Activated CD4-positive, alpha-beta T cell treated with anti-CD3 and anti-CD28 coated beads, Interleukin-2, amount 10 ng/mL, durations not matched to agents 7 days and 5 days (primary cell): ENCODE measurements at regions of chr17 and their contacts with region 1.

Region 1: DNA sequence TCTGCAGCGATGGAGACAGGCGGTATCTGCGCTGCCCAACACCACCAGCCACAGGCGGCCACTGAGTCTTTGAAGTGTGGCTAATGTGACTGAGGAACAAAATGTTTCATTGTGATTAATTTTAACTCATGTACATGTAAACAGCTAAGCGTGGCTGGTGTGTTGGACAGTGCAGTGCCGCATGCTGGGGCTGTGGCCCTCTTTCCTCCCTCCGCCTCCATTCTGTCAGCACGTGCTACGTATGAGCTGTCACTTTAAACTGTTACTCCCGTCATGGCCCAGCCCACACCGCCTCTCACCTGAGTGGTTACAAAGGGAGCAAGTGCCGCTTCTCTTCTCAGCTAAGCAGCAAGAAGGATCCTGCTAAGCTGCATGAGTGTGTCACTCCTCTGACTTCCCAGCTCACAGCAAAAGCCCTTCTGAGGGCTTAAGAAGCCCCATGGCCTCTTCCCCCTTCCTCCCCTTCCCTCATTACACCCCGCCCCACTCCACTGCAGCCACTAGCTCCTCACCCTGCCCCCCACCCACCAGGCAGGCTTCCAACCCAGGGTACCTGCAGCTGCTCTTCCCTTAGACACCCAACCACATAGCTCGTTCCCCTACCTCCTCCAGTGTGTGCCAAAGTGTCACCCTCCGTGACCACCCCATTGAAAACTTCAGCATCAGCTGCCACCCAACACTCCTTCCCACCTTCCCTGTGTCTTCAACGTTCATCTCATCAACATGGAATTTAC is 15.0 kb downstream of the HASPIN start:
- DNase-seq: peak; percentile 60
- H3K4me3 Mint-ChIP-seq: no peak overlapping the region
- H3K27ac Mint-ChIP-seq: peak overlapping the region; percentile 33
- H3K4me1 Mint-ChIP-seq: peaks cover 40% of the 10 kb centered on the region
- H3K27me3 Mint-ChIP-seq: no peaks in the 10 kb centered on the region

Region 2: DNA sequence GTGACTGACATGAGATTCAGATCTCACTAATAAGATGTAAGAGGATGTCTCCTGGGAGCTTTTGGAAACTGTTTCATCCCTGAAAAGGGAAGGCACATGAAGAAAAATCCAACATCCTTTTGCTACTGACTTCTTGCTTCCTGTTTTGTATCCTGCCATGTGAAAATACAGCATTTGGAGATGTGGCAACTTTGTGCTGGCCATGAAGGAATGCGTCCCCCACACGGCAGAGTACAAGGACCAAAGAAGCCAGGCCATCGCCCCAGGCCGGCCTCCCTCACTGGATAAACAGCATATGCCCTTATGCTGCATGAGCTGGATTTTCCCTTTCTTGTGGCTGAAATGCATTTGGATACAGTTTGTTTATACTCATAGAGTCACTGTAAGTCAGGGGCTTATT is 20.5 kb before region 1 on chr17:
- CTCF ChIA-PET with region 1: interaction called, 31 read pairs
- POLR2A ChIA-PET with region 1: no interaction called
- DNase-seq: no peak
- H3K4me3 Mint-ChIP-seq: no peak overlapping the region
- H3K27ac Mint-ChIP-seq: no peak overlapping the region
- H3K4me1 Mint-ChIP-seq: peaks cover 68% of the 10 kb centered on the region
- H3K27me3 Mint-ChIP-seq: no peaks in the 10 kb centered on the region

Region 3: DNA sequence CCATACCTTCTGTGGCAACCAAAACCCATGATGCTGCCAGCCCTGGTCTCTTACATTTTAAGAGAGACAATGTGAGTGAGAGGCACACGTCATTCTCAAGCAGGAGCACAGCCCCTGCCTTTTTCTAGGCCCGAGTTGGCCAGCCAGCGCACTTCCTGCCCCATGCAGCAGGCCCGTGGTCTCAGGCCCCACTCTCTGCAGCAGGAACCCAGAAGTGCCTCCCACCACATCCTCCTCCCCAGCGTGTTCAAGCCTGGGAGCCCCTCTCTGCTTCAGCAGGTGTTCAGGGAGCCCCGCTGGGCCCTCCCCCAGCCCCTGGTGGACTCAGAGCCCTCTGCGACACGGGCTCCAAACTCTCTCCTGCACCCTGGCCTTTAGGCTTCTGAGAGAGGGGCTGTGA is 31.7 kb after region 1 on chr17:
- CTCF ChIA-PET with region 1: interaction called, 13 read pairs
- POLR2A ChIA-PET with region 1: no interaction called
- DNase-seq: no peak
- H3K4me3 Mint-ChIP-seq: no peak overlapping the region
- H3K27ac Mint-ChIP-seq: no peak overlapping the region
- H3K4me1 Mint-ChIP-seq: peaks cover 52% of the 10 kb centered on the region
- H3K27me3 Mint-ChIP-seq: peaks cover 5% of the 10 kb centered on the region

Region 4: DNA sequence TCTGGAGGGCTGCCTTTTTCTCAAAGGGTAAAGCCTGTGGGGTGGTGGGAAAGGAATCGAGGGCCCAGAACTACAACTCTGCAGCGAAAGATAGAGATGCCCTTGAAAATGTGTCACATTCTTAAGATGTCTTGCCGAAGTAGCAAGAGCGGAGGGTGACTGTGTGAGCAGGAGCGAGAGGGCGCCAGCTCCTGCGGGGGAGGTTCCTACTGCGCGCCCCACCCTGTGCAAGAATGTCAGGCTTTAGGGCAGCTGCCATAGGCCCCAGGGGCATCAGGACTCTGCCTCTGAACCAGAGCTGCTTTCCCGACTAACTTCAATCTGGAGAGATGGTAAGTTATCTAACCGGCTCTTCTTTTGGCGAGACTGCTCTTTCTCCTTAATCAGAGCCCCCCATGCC is 74.0 kb after region 1 on chr17:
- CTCF ChIA-PET with region 1: interaction called, 18 read pairs
- POLR2A ChIA-PET with region 1: interaction called, 3 read pairs
- DNase-seq: no peak
- H3K4me3 Mint-ChIP-seq: no peak overlapping the region
- H3K27ac Mint-ChIP-seq: no peak overlapping the region
- H3K4me1 Mint-ChIP-seq: no peaks in the 10 kb centered on the region
- H3K27me3 Mint-ChIP-seq: no peaks in the 10 kb centered on the region

Region 5: GRCh38 chr17:3838206-3838605 is 99.5 kb after region 1 on chr17:
- CTCF ChIA-PET with region 1: interaction called, 12 read pairs
- POLR2A ChIA-PET with region 1: interaction called, 3 read pairs
- DNase-seq: no peak
- H3K4me3 Mint-ChIP-seq: no peak overlapping the region
- H3K27ac Mint-ChIP-seq: no peak overlapping the region
- H3K4me1 Mint-ChIP-seq: peaks cover 3% of the 10 kb centered on the region
- H3K27me3 Mint-ChIP-seq: no peaks in the 10 kb centered on the region